ENCODE measurements at regions of chr7 and their contacts with region 1.

Region 1: DNA sequence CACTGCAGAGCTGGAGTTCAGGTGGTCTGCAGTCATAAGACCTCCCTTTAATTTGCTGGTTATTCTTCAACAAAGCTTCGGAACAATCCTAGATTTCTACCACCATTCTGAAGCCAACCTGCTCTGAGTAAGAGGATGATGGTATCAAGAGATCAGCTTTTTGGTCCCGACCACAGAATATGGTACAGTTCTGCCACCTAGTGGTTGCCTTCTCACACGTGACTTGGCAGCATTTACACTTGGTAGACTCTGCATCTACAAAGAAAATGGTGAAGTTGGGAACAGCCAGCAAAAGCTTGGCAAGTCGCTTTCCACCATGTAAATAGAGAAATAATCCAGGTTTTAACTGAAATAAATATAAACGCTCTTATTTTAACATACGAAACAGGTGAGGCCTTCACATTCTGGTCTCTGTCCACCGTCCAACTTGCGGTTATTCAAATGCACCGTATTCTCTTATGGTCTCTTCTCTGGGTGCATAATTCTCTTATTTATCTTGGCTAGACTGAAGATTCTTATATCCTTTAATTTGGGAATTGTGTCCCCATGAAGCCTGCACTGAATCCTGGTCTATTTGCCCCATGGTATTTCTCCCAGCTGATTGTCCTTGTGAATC is 173.9 kb upstream of the GRM3 start:
- ATAC-seq: peak in 7 of 8 experiments; percentile 38 to 97 (median 78)
- H3K4me3 ChIP-seq: no peak overlapping the region
- H3K27ac ChIP-seq: no peak overlapping the region
- H3K4me1 ChIP-seq: peaks cover 0 to 2% of the 10 kb centered on the region in 2 donors

Region 2: DNA sequence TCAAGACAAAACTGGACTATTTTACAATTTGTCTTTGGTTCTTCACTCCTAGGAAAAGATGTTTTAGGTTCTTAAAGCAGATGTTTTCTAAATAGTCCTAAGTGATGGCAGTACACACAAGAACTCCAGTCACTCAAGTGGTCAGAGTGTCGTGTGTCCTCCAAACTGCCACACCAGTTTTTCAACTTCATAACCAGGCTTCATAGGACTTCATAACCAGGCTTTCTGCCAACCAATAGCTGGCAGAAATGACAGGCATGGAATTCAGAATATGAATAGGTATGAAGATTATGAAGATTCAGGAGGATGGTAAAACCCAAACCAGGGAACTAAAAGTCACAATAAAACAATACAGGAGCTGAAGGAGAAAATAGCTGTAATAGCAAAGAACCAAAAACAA is 561.7 kb before region 1 on chr7:
- in situ Hi-C with region 1: loop called in 1 of 9 experiments (anchors 10 kb)
- ATAC-seq: no peak
- H3K4me3 ChIP-seq: no peak overlapping the region
- H3K27ac ChIP-seq: no peak overlapping the region
- H3K4me1 ChIP-seq: no peaks in the 10 kb centered on the region

Region 3: GRCh38 chr7:86320889-86321288 is 148.9 kb before region 1 on chr7:
- in situ Hi-C with region 1: no loop called
- ATAC-seq: peak in 3 of 8 experiments; percentile 32 to 53 (median 45)
- H3K4me3 ChIP-seq: no peak overlapping the region
- H3K27ac ChIP-seq: no peak overlapping the region
- H3K4me1 ChIP-seq: peaks cover 0 to 7% of the 10 kb centered on the region in 2 donors

Region 4: DNA sequence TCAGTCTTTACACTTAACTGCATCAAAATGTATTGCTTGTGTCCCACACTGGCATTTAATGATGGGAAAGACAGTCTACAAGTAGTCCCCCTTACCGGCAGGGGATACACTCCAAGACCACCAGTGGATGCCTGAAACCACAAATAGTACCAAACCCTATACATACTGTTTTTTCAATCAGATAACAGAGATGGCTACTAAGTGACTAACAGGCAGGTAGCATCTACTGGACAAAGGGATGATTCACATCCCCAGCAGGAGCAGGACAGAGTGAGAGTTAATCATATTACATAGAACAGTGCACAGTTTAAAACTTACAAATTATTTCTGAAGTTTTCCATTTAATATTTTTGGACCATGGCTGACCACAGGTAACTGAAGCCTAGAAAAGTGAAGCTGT is 736.6 kb after region 1 on chr7:
- in situ Hi-C with region 1: no loop called
- ATAC-seq: no peak
- H3K4me3 ChIP-seq: no peak overlapping the region
- H3K27ac ChIP-seq: no peak overlapping the region
- H3K4me1 ChIP-seq: no peaks in the 10 kb centered on the region

Measured in motor neuron (in vitro differentiated cells).